ENCODE measurements at regions of chrX and their contacts with region 1.

Region 1: GRCh38 chrX:114952696-114953095 is 64.7 kb downstream of the IL13RA2 start:
- H3K4me3 ChIP-seq: no peak overlapping the region
- H3K27ac ChIP-seq: no peak overlapping the region
- H3K4me1 ChIP-seq: no peaks in the 10 kb centered on the region
- CTCF ChIP-seq: no peak

Region 2: DNA sequence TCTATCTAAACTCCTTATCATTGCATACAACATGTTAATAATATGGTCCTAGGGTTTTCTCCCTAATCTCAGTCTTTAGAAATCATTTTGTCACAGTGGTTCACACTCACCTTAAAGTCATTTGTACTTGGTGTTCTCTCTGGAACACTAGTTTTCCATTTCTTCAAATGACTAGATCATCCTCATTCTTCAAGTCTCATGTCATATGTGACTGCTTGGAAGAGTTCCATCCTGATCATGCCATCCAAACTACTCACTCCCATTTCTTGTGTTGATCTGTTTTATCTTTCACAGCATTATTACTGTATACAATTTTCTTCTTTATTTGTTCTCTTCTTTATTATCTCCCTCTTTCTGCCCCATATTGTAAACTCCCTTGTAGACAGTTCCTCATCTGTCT is 302.3 kb before region 1 on chrX:
- CTCF ChIA-PET with region 1: interaction called, 10 read pairs
- POLR2A ChIA-PET with region 1: no interaction called
- H3K4me3 ChIP-seq: no peak overlapping the region
- H3K27ac ChIP-seq: no peak overlapping the region
- H3K4me1 ChIP-seq: no peaks in the 10 kb centered on the region
- CTCF ChIP-seq: no peak

Region 3: DNA sequence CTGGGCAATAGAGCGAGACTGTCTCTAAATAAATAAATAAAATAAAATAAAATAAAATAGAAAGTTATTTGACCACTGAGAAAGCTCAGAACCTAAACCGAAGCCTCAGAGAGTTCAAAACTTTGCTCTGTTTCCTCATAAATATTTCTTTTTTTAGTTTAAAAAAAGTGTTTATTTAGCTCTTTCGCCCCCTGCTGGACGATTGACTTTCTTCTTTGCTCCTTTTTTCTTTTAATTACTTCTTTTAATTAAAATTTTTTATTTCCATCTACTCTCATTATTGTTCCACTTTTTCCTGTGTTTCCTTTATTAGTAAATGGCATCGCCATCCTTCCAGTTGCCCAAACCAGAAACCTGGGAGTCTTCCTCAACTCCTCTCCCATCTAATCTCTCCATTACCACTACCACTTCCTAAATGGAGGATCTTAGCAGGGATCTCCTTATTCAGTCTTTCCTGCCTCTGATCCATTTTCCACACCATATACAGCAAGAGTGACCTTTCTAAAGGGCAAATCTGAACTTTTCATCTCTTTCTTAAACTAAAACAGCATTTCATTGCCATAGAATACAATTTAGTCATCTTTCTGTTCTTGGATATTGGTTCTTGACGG is 65.4 kb after region 1 on chrX:
- CTCF ChIA-PET with region 1: no interaction called
- POLR2A ChIA-PET with region 1: no interaction called
- H3K4me3 ChIP-seq: no peak overlapping the region
- H3K27ac ChIP-seq: no peak overlapping the region
- H3K4me1 ChIP-seq: no peaks in the 10 kb centered on the region
- CTCF ChIP-seq: no peak

Measured in HEK293 (cell line).